Dorsolateral prefrontal cortex (tissue), 120 donors: ENCODE measurements at regions of chr3 and their contacts with region 1.

Region 1: DNA sequence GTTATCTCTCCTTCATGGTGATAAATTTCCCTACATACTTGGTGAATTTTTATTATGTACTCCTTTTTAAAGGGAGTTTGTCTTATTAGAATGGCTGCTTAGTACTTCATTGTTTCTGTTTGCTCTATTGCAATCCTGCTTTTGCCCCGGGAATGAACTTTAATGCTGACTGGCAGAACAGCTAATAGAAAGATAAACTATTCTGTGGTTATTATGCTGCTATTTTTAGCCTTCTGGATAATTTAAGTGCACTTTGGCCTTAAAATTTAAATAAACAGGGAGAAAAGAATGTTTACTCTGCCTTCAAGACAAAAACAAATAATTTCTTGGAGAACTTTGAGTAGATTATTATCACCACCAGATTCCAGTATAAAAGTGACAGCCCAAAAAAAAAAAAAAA is 413.8 kb upstream of the CCDC54 start:
- DNase-seq: no peak
- H3K4me3 ChIP-seq: peak overlapping the region in 30 of 59 donors; percentile 6 to 40 (median 22)
- H3K27ac ChIP-seq: no peak overlapping the region
- H3K27me3 ChIP-seq: no peaks in the 10 kb centered on the region
- CTCF ChIP-seq: no peak

Region 2: DNA sequence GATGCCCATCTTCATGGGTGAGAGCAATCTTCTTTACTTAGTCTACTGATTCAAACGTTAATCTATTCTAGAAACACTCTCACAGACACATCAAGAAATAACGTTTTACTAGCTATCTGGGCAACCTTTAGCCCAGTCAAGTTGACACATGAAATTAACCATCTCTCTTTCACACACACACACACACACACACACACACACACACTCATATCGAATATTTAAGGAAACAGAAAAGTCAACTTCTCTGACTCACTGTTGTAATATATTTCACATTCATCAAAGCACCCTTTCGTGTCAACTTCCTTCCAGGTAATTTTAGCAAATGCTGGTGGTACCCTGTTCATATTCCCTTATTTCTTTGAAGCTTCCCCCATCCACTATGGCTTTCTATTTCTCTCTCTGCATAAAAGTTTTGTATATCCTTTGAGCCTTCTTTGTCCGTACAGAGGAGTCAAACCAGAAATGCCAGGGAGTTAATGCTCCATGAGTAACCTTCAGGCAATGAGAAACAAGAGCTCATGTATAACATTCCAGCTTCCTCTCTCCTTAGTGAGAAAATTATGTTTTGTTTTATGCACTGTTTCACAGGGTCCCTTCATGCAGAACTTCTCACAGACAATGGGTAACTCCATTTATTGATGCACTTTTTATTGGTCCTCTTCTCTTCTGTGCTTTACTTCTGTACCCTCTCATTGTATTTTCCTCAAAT is 759.1 kb before region 1 on chr3:
- intact Hi-C with region 1: no loop called
- DNase-seq: no peak
- H3K4me3 ChIP-seq: no peak overlapping the region
- H3K27ac ChIP-seq: no peak overlapping the region
- H3K27me3 ChIP-seq: no peaks in the 10 kb centered on the region
- CTCF ChIP-seq: no peak

Region 3: GRCh38 chr3:106862067-106862466 is 101.4 kb before region 1 on chr3:
- intact Hi-C with region 1: no loop called
- DNase-seq: no peak
- H3K4me3 ChIP-seq: peak overlapping the region in 1 of 59 donors; percentile 26
- H3K27ac ChIP-seq: no peak overlapping the region
- H3K27me3 ChIP-seq: no peaks in the 10 kb centered on the region
- CTCF ChIP-seq: peak in 31 of 56 donors; percentile 9 to 48 (median 23)

Region 4: GRCh38 chr3:107024551-107025026 is 61.1 kb after region 1 on chr3:
- intact Hi-C with region 1: loop called in 1 of 2 experiments (anchors 10 kb)
- DNase-seq: peak in 1 of 10 donors; percentile 36
- H3K4me3 ChIP-seq: peak overlapping the region in 6 of 59 donors; percentile 0 to 26 (median 10)
- H3K27ac ChIP-seq: peak overlapping the region in 44 of 59 donors; percentile 1 to 98 (median 90)
- H3K27me3 ChIP-seq: no peaks in the 10 kb centered on the region
- CTCF ChIP-seq: no peak

Region 5: GRCh38 chr3:107045791-107046190 is 82.3 kb after region 1 on chr3:
- intact Hi-C with region 1: loop called in 1 of 2 experiments (anchors 10 kb)
- DNase-seq: peak in 6 of 10 donors; percentile 17 to 64 (median 52)
- H3K4me3 ChIP-seq: peak overlapping the region in 34 of 59 donors; percentile 1 to 49 (median 18)
- H3K27ac ChIP-seq: peak overlapping the region; percentile 16 to 92 (median 79)
- H3K27me3 ChIP-seq: no peaks in the 10 kb centered on the region
- CTCF ChIP-seq: peak in 2 of 56 donors; percentile 7 to 26

Region 6: GRCh38 chr3:107092121-107092520 is 128.7 kb after region 1 on chr3:
- intact Hi-C with region 1: no loop called
- DNase-seq: no peak
- H3K4me3 ChIP-seq: no peak overlapping the region
- H3K27ac ChIP-seq: no peak overlapping the region
- H3K27me3 ChIP-seq: no peaks in the 10 kb centered on the region
- CTCF ChIP-seq: no peak